Sciatic nerve (tissue), 2 donors: ENCODE measurements at regions of chr5 and their contacts with region 1.

Region 1: GRCh38 chr5:56270568-56271392 is 37.6 kb upstream of the ANKRD55 start:
- DNase-seq: peak; percentile 91
- ATAC-seq: peak; percentile 99

Region 2: GRCh38 chr5:56183506-56183905 is 87.3 kb before region 1 on chr5:
- intact Hi-C with region 1: no loop called
- DNase-seq: no peak
- ATAC-seq: no peak

Region 3: GRCh38 chr5:56838409-56839039 is 567.7 kb after region 1 on chr5:
- intact Hi-C with region 1: loop called (anchors 2 kb)
- DNase-seq: no peak
- ATAC-seq: peak; percentile 78